ENCODE measurements at regions of chr3 and their contacts with region 1.

Region 1: GRCh38 chr3:190357468-190357867 is 30.5 kb upstream of the CLDN16 start:
- DNase-seq: no peak
- ATAC-seq: peak; percentile 48
- H3K4me3 ChIP-seq: no peak overlapping the region
- H3K27ac ChIP-seq: no peak overlapping the region
- H3K4me1 ChIP-seq: no peaks in the 10 kb centered on the region
- H3K27me3 ChIP-seq: no peaks in the 10 kb centered on the region
- CTCF ChIP-seq: no peak
- EP300 ChIP-seq: no peak
- POLR2A ChIP-seq: no peak
- RAD21 ChIP-seq: no peak

Region 2: GRCh38 chr3:190301591-190301990 is 55.9 kb before region 1 on chr3:
- CTCF ChIA-PET with region 1: no interaction called
- POLR2A ChIA-PET with region 1: interaction called, 5 read pairs
- RAD21 ChIA-PET with region 1: interaction called, 3 read pairs
- SMC1A ChIA-PET with region 1: interaction called, 16 read pairs
- in situ Hi-C with region 1: no loop called
- intact Hi-C with region 1: no loop called
- DNase-seq: no peak
- ATAC-seq: peak; percentile 41
- H3K4me3 ChIP-seq: no peak overlapping the region
- H3K27ac ChIP-seq: no peak overlapping the region
- H3K4me1 ChIP-seq: no peaks in the 10 kb centered on the region
- H3K27me3 ChIP-seq: no peaks in the 10 kb centered on the region
- CTCF ChIP-seq: no peak
- EP300 ChIP-seq: no peak
- POLR2A ChIP-seq: no peak
- RAD21 ChIP-seq: no peak

Region 3: DNA sequence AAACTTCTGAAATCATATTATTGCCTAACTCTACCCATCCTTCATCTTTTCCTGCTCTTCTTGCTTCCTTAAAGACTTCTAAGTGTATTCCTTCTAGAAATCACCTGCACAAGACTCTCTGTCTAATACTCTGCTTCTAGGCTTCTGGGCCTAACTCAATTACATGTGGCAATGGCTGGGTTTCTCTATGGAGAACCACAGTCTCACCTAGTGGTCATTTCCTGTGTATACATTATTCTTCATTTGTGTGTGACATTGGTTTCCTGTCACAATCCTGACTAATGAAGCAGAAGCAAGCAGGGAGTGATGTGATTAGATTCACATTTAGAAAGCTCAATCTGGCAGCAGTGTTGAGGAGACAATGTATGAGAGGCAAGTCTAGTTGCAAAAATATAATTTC is 18.3 kb before region 1 on chr3:
- CTCF ChIA-PET with region 1: interaction called, 11 read pairs
- POLR2A ChIA-PET with region 1: no interaction called
- RAD21 ChIA-PET with region 1: interaction called, 5 read pairs
- SMC1A ChIA-PET with region 1: interaction called, 12 read pairs
- in situ Hi-C with region 1: no loop called
- intact Hi-C with region 1: no loop called
- DNase-seq: peak; percentile 11
- ATAC-seq: peak; percentile 95
- H3K4me3 ChIP-seq: no peak overlapping the region
- H3K27ac ChIP-seq: no peak overlapping the region
- H3K4me1 ChIP-seq: no peaks in the 10 kb centered on the region
- H3K27me3 ChIP-seq: no peaks in the 10 kb centered on the region
- CTCF ChIP-seq: peak; percentile 21 to 34 (median 28); a peak in 4 of 6 replicates
- EP300 ChIP-seq: no peak
- POLR2A ChIP-seq: no peak
- RAD21 ChIP-seq: peak; percentile 62

Region 4: DNA sequence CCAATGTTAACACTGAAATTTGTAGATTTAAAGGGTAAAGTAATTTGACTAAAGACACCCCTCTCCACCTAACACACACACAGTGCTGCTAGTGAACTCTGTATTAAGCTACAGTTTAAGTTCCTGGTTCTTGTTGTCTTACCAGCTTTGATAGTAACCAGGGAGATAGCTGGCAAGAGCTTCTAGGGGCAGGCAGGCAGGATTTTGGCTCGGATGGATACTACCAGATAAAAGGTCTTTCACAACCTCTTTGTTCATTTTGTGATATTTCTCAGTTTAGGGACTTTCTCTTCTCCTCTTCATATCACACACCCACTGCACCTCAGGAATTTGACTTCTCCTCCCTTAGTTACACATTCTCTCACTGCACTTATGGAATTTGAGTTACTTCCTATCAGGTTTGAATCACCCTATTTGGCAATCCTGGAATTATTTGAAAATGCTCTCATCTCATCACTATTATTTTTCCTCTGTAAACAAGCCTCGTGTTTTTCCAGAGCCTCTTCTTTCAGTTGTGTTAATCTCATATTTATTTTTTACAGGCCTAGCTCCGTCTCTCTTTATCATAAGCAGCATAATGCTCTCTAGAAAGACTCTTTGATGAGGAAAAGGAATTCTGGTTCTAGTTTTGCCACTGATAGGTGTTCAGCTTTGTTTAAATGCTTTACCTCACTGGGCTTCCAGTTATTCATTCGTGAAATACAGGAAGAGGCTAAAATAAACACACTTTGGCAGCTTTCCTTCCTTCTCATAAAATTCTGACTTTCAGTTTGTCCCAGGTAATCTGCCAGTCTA is 12.2 kb before region 1 on chr3:
- CTCF ChIA-PET with region 1: interaction called, 8 read pairs
- POLR2A ChIA-PET with region 1: interaction called, 4 read pairs
- RAD21 ChIA-PET with region 1: interaction called, 4 read pairs
- SMC1A ChIA-PET with region 1: interaction called, 12 read pairs
- in situ Hi-C with region 1: no loop called
- intact Hi-C with region 1: no loop called
- DNase-seq: no peak
- ATAC-seq: peak; percentile 80
- H3K4me3 ChIP-seq: no peak overlapping the region
- H3K27ac ChIP-seq: no peak overlapping the region
- H3K4me1 ChIP-seq: no peaks in the 10 kb centered on the region
- H3K27me3 ChIP-seq: no peaks in the 10 kb centered on the region
- CTCF ChIP-seq: no peak
- EP300 ChIP-seq: no peak
- POLR2A ChIP-seq: no peak
- RAD21 ChIP-seq: no peak

Region 5: DNA sequence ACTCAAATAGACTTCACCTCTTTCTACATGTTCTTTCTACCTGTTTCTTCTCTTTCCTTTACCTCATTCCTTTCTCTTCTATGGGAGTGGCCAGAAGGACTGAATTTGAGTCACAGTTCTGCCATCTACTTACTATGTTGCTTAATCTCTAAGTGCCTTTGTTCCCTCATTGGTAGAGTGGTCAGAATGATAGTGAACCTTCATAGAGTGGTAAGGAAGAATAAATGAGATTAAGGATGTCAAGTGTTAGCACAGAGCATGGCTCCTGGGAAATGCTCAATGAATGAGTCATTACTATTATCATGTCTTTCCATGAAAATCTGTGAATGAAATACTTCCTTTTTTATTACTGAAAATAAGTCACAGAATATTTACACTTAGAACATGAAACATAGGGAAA is 74.7 kb after region 1 on chr3:
- CTCF ChIA-PET with region 1: no interaction called
- POLR2A ChIA-PET with region 1: no interaction called
- RAD21 ChIA-PET with region 1: no interaction called
- SMC1A ChIA-PET with region 1: no interaction called
- in situ Hi-C with region 1: no loop called
- intact Hi-C with region 1: no loop called
- DNase-seq: no peak
- ATAC-seq: no peak
- H3K4me3 ChIP-seq: no peak overlapping the region
- H3K27ac ChIP-seq: no peak overlapping the region
- H3K4me1 ChIP-seq: no peaks in the 10 kb centered on the region
- H3K27me3 ChIP-seq: no peaks in the 10 kb centered on the region
- CTCF ChIP-seq: no peak
- EP300 ChIP-seq: no peak
- POLR2A ChIP-seq: no peak
- RAD21 ChIP-seq: no peak

Measured in GM12878 (cell line).